ENCODE measurements at regions of chrX and their contacts with region 1.

Region 1: GRCh38 chrX:12814420-12814819 is 23.2 kb downstream of the PRPS2 start:
- DNase-seq: no peak

Region 2: GRCh38 chrX:12526296-12526695 is 288.1 kb before region 1 on chrX:
- intact Hi-C with region 1: no loop called
- DNase-seq: no peak

Region 3: DNA sequence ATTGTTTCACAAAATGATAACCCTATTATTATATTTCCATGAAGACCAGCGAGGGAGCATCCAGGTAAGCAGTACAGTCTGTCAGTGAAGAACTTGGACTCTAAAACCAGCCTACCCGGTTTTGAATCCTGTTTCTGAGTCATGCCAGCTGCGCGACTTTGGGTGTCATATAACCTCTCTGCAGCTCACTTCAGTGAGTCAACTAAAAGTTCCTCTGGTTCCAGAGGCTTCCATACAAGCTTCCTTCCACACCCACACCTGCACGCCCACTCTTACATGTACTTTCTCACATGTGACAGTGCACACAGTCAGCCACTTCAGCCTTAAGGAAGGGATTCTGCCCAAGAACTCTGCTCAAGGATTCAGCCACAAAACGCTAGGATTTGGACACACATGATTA is 73.0 kb before region 1 on chrX:
- intact Hi-C with region 1: loop called in 1 of 2 experiments (anchors 2 kb)
- DNase-seq: no peak

Region 4: GRCh38 chrX:12894074-12895030 is 79.9 kb after region 1 on chrX:
- intact Hi-C with region 1: loop called in 1 of 2 experiments (anchors 10 kb)
- DNase-seq: no peak